Activated CD4-positive, alpha-beta T cell treated with anti-CD3 and anti-CD28 coated beads for 36 hours (primary cell): ENCODE measurements at regions of chr14 and their contacts with region 1.

Region 1: GRCh38 chr14:100645192-100645990 is 58.2 kb upstream of the BEGAIN start:
- DNase-seq: peak; percentile 95
- ATAC-seq: peak; percentile 86
- H3K4me3 Mint-ChIP-seq: no peak overlapping the region
- H3K27ac Mint-ChIP-seq: no peak overlapping the region
- H3K4me1 Mint-ChIP-seq: peaks cover 39% of the 10 kb centered on the region
- H3K27me3 Mint-ChIP-seq: no peaks in the 10 kb centered on the region

Region 2: DNA sequence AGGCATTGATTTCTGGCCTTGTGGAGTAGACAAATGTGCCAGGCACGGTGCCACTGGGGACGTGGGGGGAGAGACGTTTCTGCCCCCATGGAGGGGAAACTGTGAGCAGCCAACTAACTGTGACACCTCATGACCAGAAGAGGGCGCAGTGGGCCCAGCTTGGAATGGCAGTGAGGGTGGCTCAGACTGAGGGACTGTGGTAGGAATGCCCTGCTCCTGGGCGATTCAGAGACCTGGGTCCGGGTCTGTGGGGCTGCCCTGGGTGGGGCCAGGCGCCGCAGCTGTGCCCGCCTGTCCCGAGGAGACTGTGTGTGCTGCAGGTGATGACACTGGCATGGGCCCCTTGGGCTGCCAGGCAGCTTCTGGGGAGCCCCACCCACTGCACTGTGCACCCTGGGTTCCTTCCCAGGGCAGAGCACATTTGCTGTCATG is 261.6 kb before region 1 on chr14:
- CTCF ChIA-PET with region 1: interaction called, 90 read pairs
- POLR2A ChIA-PET with region 1: no interaction called
- intact Hi-C with region 1: loop called (anchors 1 kb)
- DNase-seq: peak; percentile 82
- ATAC-seq: peak; percentile 97
- H3K4me3 Mint-ChIP-seq: no peak overlapping the region
- H3K27ac Mint-ChIP-seq: no peak overlapping the region
- H3K4me1 Mint-ChIP-seq: peaks cover 4% of the 10 kb centered on the region
- H3K27me3 Mint-ChIP-seq: no peaks in the 10 kb centered on the region

Region 3: DNA sequence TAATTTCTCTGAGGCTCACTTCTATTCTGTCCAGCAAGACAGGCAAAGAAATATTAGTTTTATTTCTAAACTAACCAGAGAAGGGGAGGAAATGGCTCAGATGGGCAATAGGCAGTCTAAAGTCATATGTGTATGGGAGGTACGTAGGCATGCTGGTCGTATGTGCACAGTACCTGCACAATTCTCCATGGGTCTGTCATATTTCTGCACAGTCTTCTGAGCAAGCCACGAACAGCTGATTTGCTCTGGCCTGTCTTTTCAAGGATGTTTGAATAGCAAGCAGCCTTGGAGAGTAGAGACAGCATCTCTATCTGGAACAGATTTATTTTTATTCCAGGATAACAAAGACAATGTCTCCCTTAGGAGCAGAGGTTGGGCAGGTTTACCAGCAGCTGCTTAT is 230.2 kb before region 1 on chr14:
- CTCF ChIA-PET with region 1: no interaction called
- POLR2A ChIA-PET with region 1: no interaction called
- intact Hi-C with region 1: no loop called
- DNase-seq: no peak
- ATAC-seq: no peak
- H3K4me3 Mint-ChIP-seq: no peak overlapping the region
- H3K27ac Mint-ChIP-seq: no peak overlapping the region
- H3K4me1 Mint-ChIP-seq: no peaks in the 10 kb centered on the region
- H3K27me3 Mint-ChIP-seq: no peaks in the 10 kb centered on the region

Region 4: GRCh38 chr14:100524933-100525243 is 120.5 kb before region 1 on chr14:
- CTCF ChIA-PET with region 1: interaction called, 57 read pairs
- POLR2A ChIA-PET with region 1: no interaction called
- intact Hi-C with region 1: loop called (anchors 1 to 2 kb)
- DNase-seq: peak; percentile 74
- ATAC-seq: peak; percentile 65
- H3K4me3 Mint-ChIP-seq: no peak overlapping the region
- H3K27ac Mint-ChIP-seq: no peak overlapping the region
- H3K4me1 Mint-ChIP-seq: no peaks in the 10 kb centered on the region
- H3K27me3 Mint-ChIP-seq: no peaks in the 10 kb centered on the region

Region 5: DNA sequence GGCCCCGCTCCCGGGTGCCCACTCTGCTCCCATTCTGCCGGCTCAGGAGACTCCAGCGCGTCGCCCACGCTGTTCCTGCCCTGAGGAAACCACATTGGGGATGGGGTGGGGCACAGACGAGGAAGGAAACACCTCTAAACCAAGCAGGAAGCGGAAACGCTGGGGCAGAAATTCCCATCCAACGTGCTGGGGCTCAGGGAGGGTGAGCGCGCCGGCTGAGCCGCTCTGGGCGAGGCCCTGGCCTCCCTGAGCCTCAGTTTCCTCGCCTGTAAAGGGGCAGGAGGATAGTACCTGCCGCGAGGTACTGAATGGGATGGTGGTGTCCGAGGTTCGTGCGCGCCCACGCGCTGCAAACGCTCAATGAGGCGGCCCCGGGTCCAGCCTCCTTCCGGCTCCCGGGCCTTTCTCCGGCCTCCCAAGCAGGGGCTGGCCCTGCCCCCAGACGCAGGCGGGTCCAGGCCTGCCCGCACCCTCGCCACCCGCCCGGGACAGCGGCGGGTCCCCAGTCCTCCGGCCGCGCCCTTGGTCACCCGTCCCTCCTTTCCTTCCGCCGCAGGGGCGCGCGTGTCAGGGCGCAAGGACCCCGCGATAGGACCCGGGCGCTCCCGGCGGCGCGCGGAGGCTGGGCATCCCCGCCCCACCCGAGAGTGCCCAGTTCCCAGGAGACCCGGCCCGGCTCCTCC is 58.8 kb before region 1 on chr14:
- CTCF ChIA-PET with region 1: no interaction called
- POLR2A ChIA-PET with region 1: no interaction called
- intact Hi-C with region 1: loop called (anchors 1 to 5 kb)
- DNase-seq: peak; percentile 56
- ATAC-seq: peak; percentile 50
- H3K4me3 Mint-ChIP-seq: peak overlapping the region; percentile 66
- H3K27ac Mint-ChIP-seq: peak overlapping the region; percentile 27
- H3K4me1 Mint-ChIP-seq: no peaks in the 10 kb centered on the region
- H3K27me3 Mint-ChIP-seq: peaks cover 23% of the 10 kb centered on the region

Region 6: DNA sequence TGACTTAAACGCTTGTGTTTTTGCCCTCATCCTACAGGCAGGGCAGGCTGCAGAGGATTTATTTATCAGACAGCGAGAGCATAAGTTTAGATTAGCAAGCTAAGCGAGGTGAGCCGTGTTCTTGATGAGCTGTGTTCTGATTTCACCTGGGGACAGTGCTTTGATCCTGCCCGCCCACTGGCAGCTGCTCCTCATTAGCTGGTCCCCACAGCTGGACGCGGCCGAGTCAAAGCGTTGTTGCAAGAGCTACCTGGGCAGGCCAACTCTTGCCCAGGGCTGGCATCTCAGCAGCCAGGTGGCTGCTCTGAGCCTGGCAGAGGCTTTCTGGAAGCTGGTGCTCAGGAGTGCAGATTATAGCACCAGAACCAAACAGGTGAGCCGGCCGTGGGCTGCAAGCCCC is 11.4 kb before region 1 on chr14:
- CTCF ChIA-PET with region 1: interaction called, 12 read pairs
- POLR2A ChIA-PET with region 1: no interaction called
- intact Hi-C with region 1: no loop called
- DNase-seq: no peak
- ATAC-seq: no peak
- H3K4me3 Mint-ChIP-seq: no peak overlapping the region
- H3K27ac Mint-ChIP-seq: no peak overlapping the region
- H3K4me1 Mint-ChIP-seq: peaks cover 7% of the 10 kb centered on the region
- H3K27me3 Mint-ChIP-seq: no peaks in the 10 kb centered on the region